B cell (primary cell): ENCODE measurements at regions of chr7 and their contacts with region 1.

Region 1: GRCh38 chr7:118195837-118196474 is 12.0 kb downstream of the LSM8 start:
- DNase-seq: peak; percentile 68
- ATAC-seq: peak; percentile 66
- H3K4me3 ChIP-seq: no peak overlapping the region
- H3K4me3 Mint-ChIP-seq: no peak overlapping the region
- H3K27ac ChIP-seq: no peak overlapping the region
- H3K27ac Mint-ChIP-seq: no peak overlapping the region
- H3K4me1 ChIP-seq: no peaks in the 10 kb centered on the region
- H3K4me1 Mint-ChIP-seq: peaks cover 2% of the 10 kb centered on the region
- H3K27me3 ChIP-seq: no peaks in the 10 kb centered on the region
- H3K27me3 Mint-ChIP-seq: no peaks in the 10 kb centered on the region
- CTCF ChIP-seq: peak; percentile 92

Region 2: GRCh38 chr7:117750612-117751563 is 445.1 kb before region 1 on chr7:
- CTCF ChIA-PET with region 1: interaction called, 4 read pairs
- POLR2A ChIA-PET with region 1: no interaction called
- intact Hi-C with region 1: loop called (anchors 10 kb)
- DNase-seq: no peak
- ATAC-seq: no peak
- H3K4me3 ChIP-seq: no peak overlapping the region
- H3K4me3 Mint-ChIP-seq: no peak overlapping the region
- H3K27ac ChIP-seq: no peak overlapping the region
- H3K27ac Mint-ChIP-seq: no peak overlapping the region
- H3K4me1 ChIP-seq: no peaks in the 10 kb centered on the region
- H3K4me1 Mint-ChIP-seq: no peaks in the 10 kb centered on the region
- H3K27me3 ChIP-seq: no peaks in the 10 kb centered on the region
- H3K27me3 Mint-ChIP-seq: peaks cover 7% of the 10 kb centered on the region
- CTCF ChIP-seq: peak; percentile 32

Region 3: DNA sequence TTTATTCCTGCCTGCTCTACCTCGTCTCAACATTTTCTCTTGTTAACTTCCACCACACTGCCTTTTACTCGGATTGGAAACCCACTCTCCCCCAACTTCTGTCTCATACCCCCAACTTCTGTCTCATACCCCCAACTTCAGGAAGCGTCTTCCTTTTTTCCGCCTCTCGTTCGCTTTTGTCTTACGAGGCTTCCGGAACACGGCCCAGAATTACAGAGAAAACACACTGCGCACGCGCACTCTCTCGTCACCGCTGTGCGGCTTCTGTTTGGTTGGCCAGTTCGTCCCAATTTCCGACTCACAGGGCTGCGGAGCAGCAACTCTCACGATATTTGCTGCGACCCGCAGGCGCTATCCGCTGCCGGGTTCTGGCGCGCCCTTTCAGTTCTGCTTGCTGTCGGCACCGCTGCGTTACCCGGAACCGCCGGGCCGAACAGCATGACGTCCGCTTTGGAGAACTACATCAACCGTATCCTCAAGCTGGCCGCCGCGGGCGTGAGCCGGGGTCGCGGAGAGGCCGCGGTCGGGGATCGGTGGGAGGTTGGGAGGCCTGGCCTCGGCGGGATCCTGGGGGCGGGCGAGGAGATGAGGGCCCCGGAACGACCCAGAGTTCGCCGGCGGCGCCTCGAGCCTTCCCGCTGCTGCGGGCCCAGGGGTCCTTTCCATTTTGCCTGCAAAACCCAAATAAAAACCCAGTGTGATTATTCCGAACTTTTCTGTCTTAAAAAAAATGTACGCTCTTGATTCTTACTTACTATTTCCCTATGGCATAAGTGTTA is 12.0 kb before region 1 on chr7 and contains the start of gene LSM8:
- CTCF ChIA-PET with region 1: interaction called, 15 read pairs
- POLR2A ChIA-PET with region 1: no interaction called
- intact Hi-C with region 1: loop called (anchors 1 kb)
- DNase-seq: peak; percentile 99
- ATAC-seq: peak; percentile 97
- H3K4me3 ChIP-seq: peak within 1 kb of the TSS; percentile 84 to 99 (median 88)
- H3K4me3 Mint-ChIP-seq: peak within 1 kb of the TSS; percentile 94
- H3K27ac ChIP-seq: peak within 1 kb of the TSS; percentile 96 to 98
- H3K27ac Mint-ChIP-seq: peak within 1 kb of the TSS; percentile 98
- H3K4me1 ChIP-seq: peaks cover 25 to 29% of the 10 kb centered on the region in 2 donors
- H3K4me1 Mint-ChIP-seq: peaks cover 50% of the 10 kb centered on the region
- H3K27me3 ChIP-seq: no peaks in the 10 kb centered on the region
- H3K27me3 Mint-ChIP-seq: no peaks in the 10 kb centered on the region
- CTCF ChIP-seq: no peak
- total RNA-seq, gene LSM8: 64.3 TPM in 2 replicates